ENCODE measurements at regions of chr21 and their contacts with region 1.

Region 1: DNA sequence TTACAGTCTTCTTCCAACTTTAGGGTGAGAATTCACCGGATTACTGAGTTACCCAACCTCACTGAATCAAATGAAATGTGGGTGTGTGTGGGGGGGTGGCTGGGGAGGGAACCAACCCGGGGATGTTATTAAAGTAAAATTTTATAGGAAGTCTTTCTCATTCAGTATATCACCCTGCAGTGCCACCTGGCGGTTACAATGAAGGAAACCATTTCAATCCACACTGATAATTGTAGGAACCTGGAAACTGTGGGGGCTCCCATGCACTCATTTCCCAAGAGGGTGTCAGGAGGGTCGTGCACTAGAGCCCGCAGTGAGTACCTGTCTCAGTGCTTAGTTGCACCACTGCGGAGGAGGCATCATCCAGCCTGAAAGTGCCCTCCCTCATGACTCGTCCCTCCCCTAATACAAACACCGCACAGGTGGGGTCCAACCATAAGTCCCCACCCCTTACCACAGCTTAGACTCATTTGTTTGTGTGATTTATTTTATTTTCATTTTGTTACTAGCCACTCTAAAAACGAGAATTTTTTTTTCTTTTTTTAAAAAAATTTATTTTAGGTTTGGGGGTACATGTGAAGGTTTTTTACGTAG is 29.1 kb upstream of the IGSF5 start:
- DNase-seq: peak in 5 of 6 donors; percentile 38 to 67 (median 46)
- ATAC-seq: peak; percentile 57 to 87 (median 80)
- H3K4me3 ChIP-seq: no peak overlapping the region
- H3K27ac ChIP-seq: no peak overlapping the region
- H3K4me1 ChIP-seq: no peaks in the 10 kb centered on the region
- H3K27me3 ChIP-seq: no peaks in the 10 kb centered on the region
- CTCF ChIP-seq: peak; percentile 44 to 69 (median 58)

Region 2: GRCh38 chr21:39518138-39518846 is 197.6 kb before region 1 on chr21:
- intact Hi-C with region 1: loop called (anchors 5 to 10 kb)
- DNase-seq: peak in 4 of 6 donors; percentile 41 to 68 (median 48)
- ATAC-seq: peak; percentile 87 to 96 (median 94)
- H3K4me3 ChIP-seq: no peak overlapping the region
- H3K27ac ChIP-seq: no peak overlapping the region
- H3K4me1 ChIP-seq: peaks cover 4 to 15% (median 10%) of the 10 kb centered on the region in 3 donors
- H3K27me3 ChIP-seq: no peaks in the 10 kb centered on the region
- CTCF ChIP-seq: peak; percentile 74 to 88 (median 84)

Region 3: GRCh38 chr21:39527664-39528381 is 188.1 kb before region 1 on chr21:
- intact Hi-C with region 1: loop called in 2 of 3 experiments (anchors 5 to 10 kb)
- DNase-seq: peak; percentile 65 to 84 (median 68)
- ATAC-seq: peak; percentile 41 to 74 (median 65)
- H3K4me3 ChIP-seq: no peak overlapping the region
- H3K27ac ChIP-seq: peak overlapping the region; percentile 13 to 69 (median 49)
- H3K4me1 ChIP-seq: peaks cover 25 to 36% (median 27%) of the 10 kb centered on the region in 3 donors
- H3K27me3 ChIP-seq: no peaks in the 10 kb centered on the region
- CTCF ChIP-seq: no peak